ENCODE measurements at regions of chr14 and their contacts with region 1.

Region 1: GRCh38 chr14:37246427-37246914 is 48.7 kb downstream of the MIPOL1 start:
- DNase-seq: no peak
- ATAC-seq: no peak
- H3K4me3 Mint-ChIP-seq: no peak overlapping the region
- H3K27ac Mint-ChIP-seq: no peak overlapping the region
- H3K4me1 Mint-ChIP-seq: no peaks in the 10 kb centered on the region
- H3K27me3 Mint-ChIP-seq: no peaks in the 10 kb centered on the region

Region 2: GRCh38 chr14:37223947-37224474 is 22.5 kb before region 1 on chr14:
- CTCF ChIA-PET with region 1: no interaction called
- POLR2A ChIA-PET with region 1: no interaction called
- DNase-seq: no peak
- ATAC-seq: no peak
- H3K4me3 Mint-ChIP-seq: no peak overlapping the region
- H3K27ac Mint-ChIP-seq: no peak overlapping the region
- H3K4me1 Mint-ChIP-seq: no peaks in the 10 kb centered on the region
- H3K27me3 Mint-ChIP-seq: no peaks in the 10 kb centered on the region

Region 3: DNA sequence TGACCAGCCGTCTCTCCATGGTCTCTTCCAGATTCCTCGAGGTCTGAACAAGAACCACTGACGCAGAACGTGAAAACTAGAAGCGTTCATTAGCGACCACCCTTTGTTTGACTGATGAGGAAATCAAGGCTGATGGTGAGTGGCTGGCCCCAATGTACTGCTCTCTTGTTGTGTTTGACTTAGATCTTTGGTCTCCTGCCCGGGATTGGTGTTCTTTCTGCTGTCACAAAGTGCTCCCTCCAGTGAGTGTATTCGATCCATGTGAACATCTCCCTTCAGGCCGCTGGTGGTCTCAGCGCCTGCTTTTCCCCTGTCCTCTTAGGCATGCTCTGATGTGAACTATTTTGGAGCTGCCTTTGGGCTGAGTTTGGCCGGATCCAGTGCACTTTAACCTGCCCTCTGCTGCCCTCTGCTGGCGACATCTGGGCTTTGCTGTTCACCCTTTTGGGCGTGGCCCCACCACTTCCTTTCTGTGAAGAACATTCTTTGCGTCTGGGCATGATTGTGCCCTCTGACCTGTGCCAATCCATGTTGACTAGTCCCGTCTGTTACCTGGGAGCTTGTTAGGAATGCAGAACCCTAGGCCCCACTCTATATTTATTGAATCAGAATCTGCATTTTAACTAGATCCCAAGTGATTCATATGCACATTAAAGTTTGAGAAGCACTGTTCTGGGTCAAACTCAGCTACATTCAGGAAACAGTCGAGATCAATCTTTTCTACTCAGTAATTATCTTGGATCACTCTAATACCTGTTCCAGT is 628.1 kb after region 1 on chr14:
- CTCF ChIA-PET with region 1: interaction called, 20 read pairs
- POLR2A ChIA-PET with region 1: no interaction called
- DNase-seq: peak; percentile 88
- ATAC-seq: peak; percentile 95
- H3K4me3 Mint-ChIP-seq: no peak overlapping the region
- H3K27ac Mint-ChIP-seq: peak overlapping the region; percentile 17
- H3K4me1 Mint-ChIP-seq: peaks cover 8% of the 10 kb centered on the region
- H3K27me3 Mint-ChIP-seq: peaks cover 3% of the 10 kb centered on the region